AG04449 (cell line): ENCODE measurements at regions of chr10 and their contacts with region 1.

Region 1: DNA sequence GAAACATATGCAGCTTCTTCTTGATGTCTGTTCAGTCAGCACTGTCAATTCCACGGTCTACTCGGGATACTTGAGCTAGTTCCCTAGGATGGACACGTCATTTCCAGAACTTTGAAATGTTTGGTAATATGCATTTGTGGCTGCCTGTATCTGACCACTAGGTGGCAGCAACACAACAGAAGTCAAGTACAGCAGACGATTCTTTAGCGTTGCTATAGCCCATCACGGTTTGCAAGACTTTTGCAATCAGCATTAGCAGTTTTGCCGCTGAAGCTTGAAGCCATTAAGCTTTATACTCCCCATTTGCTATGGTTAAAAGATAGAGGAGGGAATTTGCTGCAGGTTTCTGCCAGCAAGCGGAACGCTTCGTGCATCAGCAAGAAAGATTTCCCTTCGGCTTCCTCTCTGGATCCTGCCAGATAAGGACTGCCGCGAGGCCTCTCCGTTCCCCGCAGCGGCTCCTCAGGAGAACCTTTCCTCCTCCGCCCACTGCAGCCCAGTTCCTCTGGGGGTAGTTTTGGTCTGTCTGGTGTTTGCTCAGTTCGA is 63.5 kb downstream of the ABCC2 start:
- DNase-seq: peak; percentile 83
- H3K4me3 ChIP-seq: no peak overlapping the region
- CTCF ChIP-seq: peak; percentile 73

Region 2: GRCh38 chr10:99573790-99574189 is 272.1 kb before region 1 on chr10:
- CTCF ChIA-PET with region 1: no interaction called
- POLR2A ChIA-PET with region 1: no interaction called
- DNase-seq: no peak
- H3K4me3 ChIP-seq: no peak overlapping the region
- CTCF ChIP-seq: no peak

Region 3: DNA sequence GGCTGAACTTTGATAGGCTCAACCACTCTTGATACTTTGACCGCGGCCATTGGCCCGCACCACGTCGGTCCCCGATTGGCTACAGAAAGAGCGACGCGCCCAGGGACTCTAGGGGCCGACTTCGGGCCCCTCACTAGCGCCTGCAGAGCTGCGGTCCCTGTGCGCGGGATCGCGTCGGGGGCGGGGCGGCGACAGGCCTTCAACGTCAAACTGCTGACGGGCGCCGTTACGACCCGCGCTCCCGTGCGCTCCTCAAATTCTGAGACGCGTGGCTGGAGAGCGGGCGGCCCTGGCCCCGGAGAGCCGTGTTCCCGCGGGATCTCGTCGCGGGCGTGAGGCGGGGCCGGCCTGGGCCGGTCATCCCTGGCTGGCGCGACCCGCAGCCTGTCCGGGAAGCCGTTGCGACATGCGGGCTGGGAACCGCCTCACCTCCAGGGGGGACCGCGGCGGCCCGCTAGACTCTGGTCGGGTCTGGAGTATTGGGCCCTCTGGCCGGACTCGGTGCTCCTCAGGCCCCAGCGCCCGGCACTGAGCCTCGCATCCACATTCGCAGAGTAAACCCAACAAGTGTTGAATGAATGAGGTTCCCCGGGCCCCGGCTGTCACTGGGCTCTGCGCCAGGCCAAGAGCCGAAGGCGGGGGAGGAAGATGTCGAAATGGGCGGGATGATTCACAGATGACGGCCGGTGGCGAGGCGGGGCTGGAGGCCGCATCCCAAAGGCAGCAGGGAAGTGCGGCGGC is 225.0 kb before region 1 on chr10:
- CTCF ChIA-PET with region 1: no interaction called
- POLR2A ChIA-PET with region 1: no interaction called
- DNase-seq: peak; percentile 61
- H3K4me3 ChIP-seq: peak overlapping the region; percentile 67
- CTCF ChIP-seq: no peak

Region 4: DNA sequence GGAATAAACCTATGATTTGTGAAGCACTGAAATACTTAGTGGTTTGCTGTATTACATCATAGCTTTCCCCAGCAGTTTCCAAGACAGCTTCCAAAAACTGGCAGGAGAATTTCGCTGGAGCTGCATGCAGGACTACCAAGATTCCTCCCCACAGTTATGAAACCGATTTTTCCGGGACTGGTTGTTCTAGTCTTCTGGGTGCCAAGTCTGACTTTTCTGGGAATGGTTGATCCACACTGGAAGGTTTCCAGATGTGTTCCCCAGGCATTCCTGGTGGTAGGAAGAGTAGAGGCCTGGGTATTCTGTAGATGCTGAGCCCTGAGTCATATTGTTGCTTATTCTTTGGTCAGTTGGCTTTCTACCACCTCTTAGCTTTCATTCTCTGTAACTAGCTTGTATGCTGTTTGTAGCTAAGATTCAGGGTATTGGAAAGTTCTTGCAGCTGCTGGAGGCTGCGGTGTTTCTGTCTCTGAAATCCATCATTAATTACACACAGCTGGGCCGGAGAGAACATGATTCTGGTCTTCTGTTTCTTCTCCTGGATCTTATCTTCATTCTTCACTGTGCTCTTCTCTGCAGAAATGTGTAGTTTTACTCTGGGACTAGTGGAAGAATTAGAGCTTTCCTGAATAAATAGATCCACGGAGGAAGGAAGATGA is 57.2 kb before region 1 on chr10:
- CTCF ChIA-PET with region 1: interaction called, 12 read pairs
- POLR2A ChIA-PET with region 1: no interaction called
- DNase-seq: peak; percentile 84
- H3K4me3 ChIP-seq: no peak overlapping the region; the same call in none of the 2 replicates
- CTCF ChIP-seq: no peak

Region 5: GRCh38 chr10:99872367-99873162 is 26.7 kb after region 1 on chr10:
- CTCF ChIA-PET with region 1: interaction called, 12 read pairs
- POLR2A ChIA-PET with region 1: interaction called, 3 read pairs
- DNase-seq: no peak
- H3K4me3 ChIP-seq: no peak overlapping the region
- CTCF ChIP-seq: no peak

Region 6: DNA sequence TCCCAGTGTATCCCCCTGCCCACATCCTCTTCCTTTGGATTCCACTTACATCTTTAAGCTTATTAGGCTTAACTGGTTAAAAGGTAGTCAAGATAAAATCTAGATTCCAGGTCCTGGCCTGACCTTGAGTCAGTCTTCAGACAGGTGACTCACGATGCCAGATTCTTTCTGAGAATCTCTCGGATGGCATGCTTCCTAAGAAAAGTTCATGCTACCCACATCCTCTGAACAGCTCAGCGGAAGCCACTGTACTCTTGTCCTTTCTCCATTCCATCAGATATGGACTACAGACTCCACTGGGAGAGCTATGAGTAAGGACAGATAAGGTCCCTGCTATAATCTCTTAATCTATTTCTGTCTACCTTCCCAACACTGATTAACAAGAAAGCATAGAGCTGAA is 120.4 kb after region 1 on chr10:
- CTCF ChIA-PET with region 1: interaction called, 62 read pairs
- POLR2A ChIA-PET with region 1: no interaction called
- DNase-seq: peak; percentile 74
- H3K4me3 ChIP-seq: no peak overlapping the region
- CTCF ChIP-seq: no peak

Region 7: GRCh38 chr10:100025576-100025975 is 179.7 kb after region 1 on chr10:
- CTCF ChIA-PET with region 1: interaction called, 14 read pairs
- POLR2A ChIA-PET with region 1: no interaction called
- DNase-seq: no peak
- H3K4me3 ChIP-seq: no peak overlapping the region
- CTCF ChIP-seq: no peak

Region 8: GRCh38 chr10:100185364-100186252 is 339.7 kb after region 1 on chr10 and contains the start of gene ERLIN1:
- CTCF ChIA-PET with region 1: interaction called, 15 read pairs
- POLR2A ChIA-PET with region 1: no interaction called
- DNase-seq: peak; percentile 42
- H3K4me3 ChIP-seq: peak within 1 kb of the TSS; percentile 89
- CTCF ChIP-seq: no peak

Region 9: DNA sequence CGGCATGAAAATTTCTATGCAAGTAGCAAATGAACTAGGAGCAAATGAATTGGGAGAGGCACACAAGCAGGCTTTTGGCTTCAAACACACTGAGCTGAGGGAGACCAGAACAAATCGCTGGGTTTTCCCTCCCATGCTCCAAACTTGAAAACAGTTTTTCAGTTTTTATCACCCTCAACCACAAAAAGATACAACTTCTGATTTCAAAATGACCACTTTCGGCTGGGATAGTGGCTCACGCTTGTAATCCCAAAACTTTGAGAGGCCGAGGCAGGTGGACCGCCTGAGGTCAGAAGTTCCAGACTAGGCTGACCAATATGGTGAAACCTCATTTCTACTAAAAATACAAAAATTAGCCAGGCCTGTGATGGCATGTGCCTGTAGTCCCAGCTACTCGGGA is 392.5 kb after region 1 on chr10:
- CTCF ChIA-PET with region 1: interaction called, 18 read pairs
- POLR2A ChIA-PET with region 1: no interaction called
- DNase-seq: no peak
- H3K4me3 ChIP-seq: no peak overlapping the region
- CTCF ChIP-seq: no peak